Right ventricle myocardium inferior (tissue), 1 donor: ENCODE measurements at regions of chr2 and their contacts with region 1.

Region 1: GRCh38 chr2:196136151-196136550 is 35.2 kb downstream of the STK17B start:
- DNase-seq: no peak
- ATAC-seq: no peak

Region 2: GRCh38 chr2:196160101-196160500 is 23.9 kb after region 1 on chr2:
- intact Hi-C with region 1: loop called (anchors 1 kb)
- DNase-seq: no peak
- ATAC-seq: peak; percentile 46